ENCODE measurements at regions of chr14 and their contacts with region 1.

Region 1: GRCh38 chr14:67426983-67427606 is 15.1 kb upstream of the PLEK2 start:
- DNase-seq: peak; percentile 55 to 81 (median 74)
- ATAC-seq: peak; percentile 91
- H3K4me3 ChIP-seq: no peak overlapping the region
- H3K4me3 Mint-ChIP-seq: no peak overlapping the region
- H3K27ac ChIP-seq: no peak overlapping the region
- H3K27ac Mint-ChIP-seq: no peak overlapping the region
- H3K4me1 ChIP-seq: no peaks in the 10 kb centered on the region
- H3K4me1 Mint-ChIP-seq: peaks cover 0 to 8% (median 0%) of the 10 kb centered on the region in 7 donors
- H3K27me3 ChIP-seq: no peaks in the 10 kb centered on the region
- H3K27me3 Mint-ChIP-seq: peaks cover 6 to 36% (median 16%) of the 10 kb centered on the region in 5 donors

Region 2: GRCh38 chr14:67413801-67414769 is 13.0 kb before region 1 on chr14:
- CTCF ChIA-PET with region 1: interaction called, 13 read pairs
- POLR2A ChIA-PET with region 1: no interaction called
- intact Hi-C with region 1: no loop called
- DNase-seq: peak in 1 of 9 donors; percentile 35
- ATAC-seq: peak; percentile 59
- H3K4me3 ChIP-seq: no peak overlapping the region
- H3K4me3 Mint-ChIP-seq: peak overlapping the region in 1 of 10 donors; percentile 41
- H3K27ac ChIP-seq: no peak overlapping the region
- H3K27ac Mint-ChIP-seq: no peak overlapping the region
- H3K4me1 ChIP-seq: peaks cover 0 to 3% of the 10 kb centered on the region in 2 donors
- H3K4me1 Mint-ChIP-seq: peaks cover 0 to 13% (median 9%) of the 10 kb centered on the region in 7 donors
- H3K27me3 ChIP-seq: peaks cover 0 to 3% of the 10 kb centered on the region in 2 donors
- H3K27me3 Mint-ChIP-seq: peaks cover 0 to 11% (median 0%) of the 10 kb centered on the region in 5 donors

Region 3: GRCh38 chr14:67440541-67440940 is 13.4 kb after region 1 on chr14:
- CTCF ChIA-PET with region 1: interaction called, 18 read pairs
- POLR2A ChIA-PET with region 1: no interaction called
- intact Hi-C with region 1: no loop called
- DNase-seq: no peak
- ATAC-seq: no peak
- H3K4me3 ChIP-seq: no peak overlapping the region
- H3K4me3 Mint-ChIP-seq: no peak overlapping the region
- H3K27ac ChIP-seq: no peak overlapping the region
- H3K27ac Mint-ChIP-seq: no peak overlapping the region
- H3K4me1 ChIP-seq: no peaks in the 10 kb centered on the region
- H3K4me1 Mint-ChIP-seq: no peaks in the 10 kb centered on the region
- H3K27me3 ChIP-seq: no peaks in the 10 kb centered on the region
- H3K27me3 Mint-ChIP-seq: peaks cover 0 to 42% (median 10%) of the 10 kb centered on the region in 5 donors

Region 4: DNA sequence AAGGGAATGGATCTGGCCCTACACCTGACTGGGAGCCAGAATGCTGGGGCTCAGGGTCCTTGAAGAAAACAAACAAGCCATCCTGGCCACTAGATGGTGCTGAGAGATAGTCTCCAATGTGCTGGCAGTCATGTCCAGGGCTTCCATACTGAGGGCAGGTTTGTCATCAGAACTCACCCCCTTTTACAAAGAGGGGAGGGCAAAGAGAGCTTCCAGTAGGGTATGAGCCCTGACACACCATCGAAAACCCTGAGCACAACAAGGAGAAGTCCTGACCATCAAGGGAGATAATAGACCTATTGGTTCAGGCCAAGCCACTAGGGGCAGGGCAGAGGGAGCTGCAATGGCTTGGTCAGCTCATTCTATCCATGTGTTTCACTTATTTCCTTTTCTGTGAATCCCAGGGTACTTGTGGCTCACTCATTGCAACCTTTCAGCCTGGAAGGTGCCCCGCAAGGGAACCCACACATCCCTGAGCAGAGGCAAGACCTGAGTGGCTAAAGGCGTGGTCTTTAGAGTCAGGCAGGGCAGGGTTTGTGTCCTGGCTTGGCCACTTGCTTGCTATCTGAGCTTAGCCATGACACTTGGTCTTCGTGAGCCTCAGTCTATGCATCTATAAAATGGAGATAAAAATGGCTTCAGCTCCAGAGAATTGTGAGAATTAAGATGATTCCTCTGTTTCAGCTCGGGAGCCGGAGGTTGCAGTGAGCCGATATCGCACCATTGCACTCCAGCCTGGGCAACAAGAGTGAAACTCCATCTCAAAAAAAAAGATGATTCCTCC is 99.8 kb after region 1 on chr14:
- CTCF ChIA-PET with region 1: interaction called, 19 read pairs
- POLR2A ChIA-PET with region 1: no interaction called
- intact Hi-C with region 1: loop called (anchors 1 to 5 kb)
- DNase-seq: peak in 5 of 9 donors; percentile 33 to 46 (median 35)
- ATAC-seq: peak; percentile 78
- H3K4me3 ChIP-seq: no peak overlapping the region
- H3K4me3 Mint-ChIP-seq: no peak overlapping the region
- H3K27ac ChIP-seq: no peak overlapping the region
- H3K27ac Mint-ChIP-seq: no peak overlapping the region
- H3K4me1 ChIP-seq: no peaks in the 10 kb centered on the region
- H3K4me1 Mint-ChIP-seq: peaks cover 0 to 6% (median 0%) of the 10 kb centered on the region in 7 donors
- H3K27me3 ChIP-seq: no peaks in the 10 kb centered on the region
- H3K27me3 Mint-ChIP-seq: peaks cover 30 to 75% (median 36%) of the 10 kb centered on the region in 5 donors

Region 5: DNA sequence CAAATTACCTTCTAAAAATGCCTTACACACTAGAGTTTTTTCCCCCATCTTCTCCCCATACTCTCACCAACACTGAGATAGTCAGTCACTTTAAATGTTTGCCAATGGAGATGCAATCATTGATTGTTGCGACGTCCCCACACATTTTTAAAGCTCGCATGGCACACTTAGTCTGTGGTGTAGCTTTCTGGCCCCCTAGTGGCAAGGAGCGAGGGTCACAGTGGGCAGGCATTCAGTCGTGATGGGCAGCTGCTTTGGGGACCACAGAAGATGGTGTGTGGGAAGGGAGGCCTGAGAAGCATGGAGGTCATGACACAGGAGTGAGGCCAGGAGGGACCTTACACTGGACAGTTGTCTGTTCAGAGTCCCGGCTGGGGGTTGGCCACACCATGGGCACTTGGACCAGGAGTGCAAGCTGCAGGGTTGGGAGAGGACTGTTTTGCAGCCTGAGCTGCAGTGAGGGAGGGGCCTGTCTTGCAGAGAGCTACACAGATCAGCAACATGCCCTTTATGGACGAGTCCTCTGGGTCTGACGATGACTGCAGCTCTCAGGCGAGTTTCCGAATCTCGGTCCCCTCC is 144.3 kb after region 1 on chr14:
- CTCF ChIA-PET with region 1: interaction called, 184 read pairs
- POLR2A ChIA-PET with region 1: interaction called, 3 read pairs
- intact Hi-C with region 1: loop called (anchors 1 kb)
- DNase-seq: peak; percentile 44 to 76 (median 64)
- ATAC-seq: peak; percentile 87
- H3K4me3 ChIP-seq: no peak overlapping the region
- H3K4me3 Mint-ChIP-seq: no peak overlapping the region
- H3K27ac ChIP-seq: no peak overlapping the region
- H3K27ac Mint-ChIP-seq: peak overlapping the region in 1 of 9 donors; percentile 32
- H3K4me1 ChIP-seq: no peaks in the 10 kb centered on the region
- H3K4me1 Mint-ChIP-seq: peaks cover 0 to 18% (median 0%) of the 10 kb centered on the region in 7 donors
- H3K27me3 ChIP-seq: no peaks in the 10 kb centered on the region
- H3K27me3 Mint-ChIP-seq: peaks cover 0 to 13% (median 5%) of the 10 kb centered on the region in 5 donors

Region 6: DNA sequence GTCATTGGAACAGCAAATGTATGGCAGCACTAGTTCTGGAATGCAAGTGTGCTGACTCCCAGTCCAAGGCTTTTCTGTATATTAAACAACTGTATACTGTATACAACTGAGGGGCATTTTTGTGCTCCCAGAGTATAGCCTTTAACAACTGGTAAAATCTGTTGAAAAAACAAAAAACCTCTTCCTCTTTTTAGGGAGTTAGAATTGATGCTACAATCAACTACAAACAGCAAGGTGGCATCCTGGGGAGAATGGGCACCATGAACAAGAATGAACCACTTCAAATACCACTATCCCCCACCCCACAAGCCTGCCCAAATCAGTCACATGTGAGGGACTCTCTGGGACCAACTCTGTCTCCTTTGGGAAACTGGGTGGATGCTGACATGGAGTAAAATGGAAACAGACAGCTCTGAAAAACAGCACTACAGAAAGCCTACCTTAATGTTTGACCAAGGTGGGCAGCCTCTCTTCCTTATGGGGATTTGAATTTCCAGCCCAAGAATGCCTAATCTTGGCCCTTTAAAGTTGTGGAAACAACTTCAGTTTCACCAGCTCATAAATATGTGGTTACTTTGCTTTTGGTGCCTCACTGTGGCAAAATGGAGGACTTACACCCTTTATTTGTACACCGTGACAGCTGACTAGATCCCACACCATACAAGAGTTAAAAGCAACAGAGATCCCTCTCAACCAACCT is 239.8 kb after region 1 on chr14:
- CTCF ChIA-PET with region 1: interaction called, 8 read pairs
- POLR2A ChIA-PET with region 1: no interaction called
- intact Hi-C with region 1: loop called (anchors 1 kb)
- DNase-seq: peak in 7 of 9 donors; percentile 43 to 64 (median 52)
- ATAC-seq: peak; percentile 88
- H3K4me3 ChIP-seq: no peak overlapping the region
- H3K4me3 Mint-ChIP-seq: peak overlapping the region in 2 of 10 donors; percentile 21 to 23
- H3K27ac ChIP-seq: no peak overlapping the region
- H3K27ac Mint-ChIP-seq: peak overlapping the region; percentile 14 to 88 (median 58)
- H3K4me1 ChIP-seq: peaks cover 5 to 7% of the 10 kb centered on the region in 2 donors
- H3K4me1 Mint-ChIP-seq: peaks cover 32 to 75% (median 63%) of the 10 kb centered on the region in 7 donors
- H3K27me3 ChIP-seq: no peaks in the 10 kb centered on the region
- H3K27me3 Mint-ChIP-seq: no peaks in the 10 kb centered on the region

Region 7: DNA sequence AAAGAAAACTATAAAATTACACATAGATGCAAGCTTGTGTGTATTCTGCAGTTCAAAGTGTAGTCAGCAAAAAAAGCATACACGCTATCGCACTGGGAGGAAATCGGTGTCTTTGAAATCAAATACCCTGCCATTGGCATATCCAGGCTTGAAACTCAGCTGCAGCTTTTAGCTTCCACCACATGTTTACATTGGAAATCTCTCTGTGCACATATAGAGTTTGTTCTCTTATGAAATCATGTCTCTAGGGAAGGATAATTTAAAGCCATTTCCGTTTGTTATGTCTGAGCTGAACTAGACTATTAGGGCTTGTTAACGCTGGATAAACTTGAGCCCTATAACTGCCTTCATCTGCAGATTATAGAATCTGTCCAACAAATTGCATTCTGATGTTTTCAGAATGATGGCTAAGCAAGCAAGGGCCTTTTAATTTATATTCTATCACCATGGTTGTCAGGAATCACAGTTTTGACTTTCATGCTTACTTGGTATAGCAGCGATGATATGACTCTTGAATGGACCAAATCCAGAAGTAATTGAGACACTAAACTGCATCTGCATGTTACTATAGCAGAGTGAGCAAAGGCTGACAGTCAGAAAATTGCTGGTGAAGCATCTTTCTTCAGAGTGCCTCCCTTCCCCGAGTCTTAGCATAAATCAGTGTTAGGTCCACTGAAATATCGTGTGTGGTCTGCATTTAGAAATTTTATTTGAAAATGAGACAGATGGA is 923.0 kb after region 1 on chr14:
- CTCF ChIA-PET with region 1: no interaction called
- POLR2A ChIA-PET with region 1: no interaction called
- intact Hi-C with region 1: no loop called
- DNase-seq: no peak
- ATAC-seq: no peak
- H3K4me3 ChIP-seq: no peak overlapping the region
- H3K4me3 Mint-ChIP-seq: no peak overlapping the region
- H3K27ac ChIP-seq: no peak overlapping the region
- H3K27ac Mint-ChIP-seq: no peak overlapping the region
- H3K4me1 ChIP-seq: no peaks in the 10 kb centered on the region
- H3K4me1 Mint-ChIP-seq: peaks cover 0 to 13% (median 10%) of the 10 kb centered on the region in 7 donors
- H3K27me3 ChIP-seq: no peaks in the 10 kb centered on the region
- H3K27me3 Mint-ChIP-seq: no peaks in the 10 kb centered on the region

Measured in naive thymus-derived CD4-positive, alpha-beta T cell (primary cell).